ENCODE measurements at regions of chr4 and their contacts with region 1.

Region 1: GRCh38 chr4:110119337-110119736 is 79.1 kb downstream of the ELOVL6 start:
- DNase-seq: no peak
- ATAC-seq: peak; percentile 81
- H3K4me3 ChIP-seq: no peak overlapping the region
- H3K27ac ChIP-seq: peak overlapping the region; percentile 32
- H3K4me1 ChIP-seq: peaks cover 5% of the 10 kb centered on the region; the same call in 1 of the 2 replicates
- H3K27me3 ChIP-seq: no peaks in the 10 kb centered on the region
- CTCF ChIP-seq: no peak
- EP300 ChIP-seq: no peak
- POLR2A ChIP-seq: no peak
- RAD21 ChIP-seq: no peak

Region 2: DNA sequence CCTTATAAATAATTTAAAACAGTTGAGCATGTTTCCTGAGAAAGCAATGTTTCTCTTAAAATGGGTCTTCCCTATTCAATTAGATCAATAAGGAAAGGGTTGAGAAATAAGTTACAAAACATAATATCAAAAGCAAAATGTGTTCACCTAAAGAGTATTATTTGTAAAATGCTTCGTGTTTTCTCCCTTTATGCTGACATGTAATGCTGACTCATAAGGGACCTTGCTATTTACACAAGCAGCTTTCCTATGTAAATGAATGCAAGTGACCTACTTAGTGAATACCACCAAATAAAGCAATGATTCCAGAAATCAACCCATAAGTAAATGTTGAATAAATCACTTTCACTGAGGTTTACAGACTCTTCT is 12.4 kb before region 1 on chr4:
- CTCF ChIA-PET with region 1: interaction called, 4 read pairs
- POLR2A ChIA-PET with region 1: no interaction called
- RAD21 ChIA-PET with region 1: interaction called, 14 read pairs
- SMC1A ChIA-PET with region 1: interaction called, 14 read pairs
- in situ Hi-C with region 1: no loop called
- intact Hi-C with region 1: no loop called
- DNase-seq: no peak
- ATAC-seq: peak; percentile 79
- H3K4me3 ChIP-seq: no peak overlapping the region
- H3K27ac ChIP-seq: peak overlapping the region; percentile 14; the same call in 1 of the 2 replicates
- H3K4me1 ChIP-seq: peaks cover 26% of the 10 kb centered on the region
- H3K27me3 ChIP-seq: no peaks in the 10 kb centered on the region
- CTCF ChIP-seq: no peak
- EP300 ChIP-seq: peak in 1 of 2 experiments; percentile 30; a peak in 1 of 4 replicates
- POLR2A ChIP-seq: no peak
- RAD21 ChIP-seq: no peak

Measured in GM12878 (cell line).